ENCODE measurements at regions of chr21 and their contacts with region 1.

Region 1: GRCh38 chr21:34881894-34882371 is 167.2 kb downstream of the RUNX1 start:
- DNase-seq: peak; percentile 12 to 89 (median 73)
- H3K4me3 ChIP-seq: peak overlapping the region; percentile 13 to 96 (median 44)
- H3K4me3 Mint-ChIP-seq: peak overlapping the region; percentile 69 to 98
- H3K27ac ChIP-seq: peak overlapping the region in 1 of 2 donors; percentile 98
- H3K27ac Mint-ChIP-seq: peak overlapping the region; percentile 91 to 99 (median 96)
- H3K4me1 ChIP-seq: peaks cover 37 to 51% of the 10 kb centered on the region in 2 donors
- H3K4me1 Mint-ChIP-seq: peaks cover 55% of the 10 kb centered on the region
- H3K27me3 ChIP-seq: no peaks in the 10 kb centered on the region
- H3K27me3 Mint-ChIP-seq: peaks cover 0 to 3% (median 0%) of the 10 kb centered on the region in 3 donors
- CTCF ChIP-seq: no peak

Region 2: DNA sequence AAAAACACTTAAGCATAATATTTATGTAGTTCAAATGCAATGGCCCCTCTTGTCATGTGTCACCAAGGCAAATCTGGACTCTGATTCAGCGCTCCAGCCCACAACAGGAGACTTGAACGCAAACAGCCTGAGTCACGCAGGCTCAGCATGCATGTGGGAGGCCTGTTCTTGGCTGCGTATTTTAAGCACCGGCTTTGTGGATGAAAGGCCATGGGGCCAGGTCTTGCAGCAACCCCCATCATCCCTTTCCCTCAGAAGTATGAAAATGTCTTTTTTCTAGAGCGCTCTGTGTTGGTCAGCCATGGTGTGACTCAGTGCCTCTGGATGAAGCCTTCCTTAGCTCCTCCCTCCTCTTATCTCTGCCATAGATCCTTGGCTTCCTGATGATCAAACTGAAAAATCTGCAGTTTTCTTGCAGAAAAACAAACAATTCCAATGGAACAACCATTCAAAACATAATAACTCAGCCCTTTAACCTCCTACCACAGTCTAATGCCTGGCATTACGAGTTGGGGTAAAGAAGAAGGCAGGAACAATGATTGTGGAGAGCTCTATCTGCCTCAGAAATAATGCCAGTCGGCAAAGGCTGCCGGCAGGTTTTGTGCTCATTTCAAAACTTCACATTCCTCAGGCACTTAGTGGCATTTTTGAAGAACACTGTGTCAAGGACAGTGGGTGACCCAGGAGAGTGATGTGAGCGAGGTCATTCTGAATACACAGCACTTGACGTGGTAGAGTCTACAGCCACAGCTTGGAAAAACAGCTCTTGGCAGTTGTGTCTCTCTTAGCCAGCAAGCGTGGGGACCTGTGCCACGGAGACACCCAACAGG is 45.6 kb before region 1 on chr21:
- intact Hi-C with region 1: loop called in 1 of 2 experiments (anchors 5 kb)
- DNase-seq: peak; percentile 91 to 97 (median 93)
- H3K4me3 ChIP-seq: no peak overlapping the region
- H3K4me3 Mint-ChIP-seq: peak overlapping the region in 1 of 2 donors; percentile 49
- H3K27ac ChIP-seq: peak overlapping the region; percentile 81 to 89
- H3K27ac Mint-ChIP-seq: peak overlapping the region; percentile 93 to 98 (median 97)
- H3K4me1 ChIP-seq: peaks cover 41 to 59% of the 10 kb centered on the region in 2 donors
- H3K4me1 Mint-ChIP-seq: peaks cover 58% of the 10 kb centered on the region
- H3K27me3 ChIP-seq: no peaks in the 10 kb centered on the region
- H3K27me3 Mint-ChIP-seq: peaks cover 0 to 2% (median 2%) of the 10 kb centered on the region in 3 donors
- CTCF ChIP-seq: no peak

Region 3: DNA sequence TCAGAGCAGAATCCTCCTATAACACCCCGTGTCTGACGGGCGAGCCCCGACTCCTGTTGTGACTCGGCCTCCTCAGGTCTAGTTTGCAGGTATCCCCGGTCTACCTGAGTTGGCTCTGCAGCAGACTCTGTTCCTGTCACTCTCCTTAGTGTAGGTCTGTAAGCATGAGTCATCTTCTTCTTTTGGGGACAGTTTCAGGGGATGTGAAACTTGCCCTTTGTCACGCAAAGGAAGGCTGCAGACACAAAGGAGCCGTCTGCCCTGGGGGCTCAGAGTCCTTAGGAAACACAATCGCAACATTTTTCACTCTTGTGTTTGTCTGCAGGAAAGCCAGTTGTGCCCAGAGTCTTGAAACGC is 16.0 kb before region 1 on chr21:
- intact Hi-C with region 1: loop called in 1 of 2 experiments (anchors 2 kb)
- DNase-seq: peak; percentile 86 to 94 (median 93)
- H3K4me3 ChIP-seq: peak overlapping the region in 1 of 3 experiments; percentile 36
- H3K4me3 Mint-ChIP-seq: peak overlapping the region; percentile 39 to 64
- H3K27ac ChIP-seq: peak overlapping the region; percentile 25 to 78
- H3K27ac Mint-ChIP-seq: peak overlapping the region; percentile 88 to 93 (median 90)
- H3K4me1 ChIP-seq: peaks cover 38 to 39% of the 10 kb centered on the region in 2 donors
- H3K4me1 Mint-ChIP-seq: peaks cover 54% of the 10 kb centered on the region
- H3K27me3 ChIP-seq: peaks cover 0 to 3% of the 10 kb centered on the region in 2 donors
- H3K27me3 Mint-ChIP-seq: peaks cover 11 to 17% (median 14%) of the 10 kb centered on the region in 3 donors
- CTCF ChIP-seq: no peak

Region 4: GRCh38 chr21:36028127-36029069 is 1146.5 kb after region 1 on chr21:
- intact Hi-C with region 1: no loop called
- DNase-seq: peak; percentile 49 to 66 (median 52)
- H3K4me3 ChIP-seq: no peak overlapping the region
- H3K4me3 Mint-ChIP-seq: no peak overlapping the region
- H3K27ac ChIP-seq: no peak overlapping the region
- H3K27ac Mint-ChIP-seq: peak overlapping the region in 2 of 7 donors; percentile 10 to 12
- H3K4me1 ChIP-seq: no peaks in the 10 kb centered on the region
- H3K4me1 Mint-ChIP-seq: peaks cover 5% of the 10 kb centered on the region
- H3K27me3 ChIP-seq: no peaks in the 10 kb centered on the region
- H3K27me3 Mint-ChIP-seq: peaks cover 0 to 7% (median 7%) of the 10 kb centered on the region in 3 donors
- CTCF ChIP-seq: peak; percentile 92

Measured in CD14-positive monocyte (primary cell).